Left cardiac atrium (tissue), 4 donors: ENCODE measurements at regions of chr6 and their contacts with region 1.

Region 1: DNA sequence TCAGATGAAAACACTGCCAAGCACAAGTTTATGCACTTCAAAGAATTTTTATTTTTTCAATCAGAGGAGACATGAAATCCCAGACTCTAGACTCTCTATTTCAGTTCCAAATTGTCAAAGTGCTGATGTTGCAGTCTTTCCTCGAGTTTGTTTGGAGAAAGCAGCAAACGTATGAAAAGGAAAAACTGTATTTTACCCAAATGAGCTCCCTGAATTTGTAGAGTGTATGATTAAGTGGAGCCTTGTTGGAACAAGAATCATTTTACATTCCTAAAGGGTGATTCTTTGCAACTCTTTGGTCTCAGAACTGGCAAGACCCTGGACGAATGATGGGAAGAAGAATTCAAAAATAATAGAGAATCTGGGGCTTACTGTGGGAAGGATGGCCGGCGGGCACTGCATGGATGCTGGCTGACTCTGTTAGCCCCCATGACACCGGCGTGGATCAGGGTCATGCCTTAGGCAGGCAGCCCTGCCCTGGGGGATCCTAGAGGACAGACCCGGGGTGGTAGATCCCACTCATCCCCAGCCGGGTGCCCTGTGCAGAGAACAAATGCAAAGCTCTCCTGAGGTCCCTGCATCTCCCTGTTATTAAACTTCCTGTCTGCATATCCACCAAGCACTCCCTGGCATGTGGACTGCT is 207.4 kb downstream of the FNDC1 start:
- DNase-seq: no peak
- ATAC-seq: peak; percentile 31 to 63

Region 2: GRCh38 chr6:159315562-159315961 is 61.1 kb before region 1 on chr6:
- intact Hi-C with region 1: loop called in 1 of 2 experiments (anchors 2 kb)
- DNase-seq: no peak
- ATAC-seq: no peak